K562 (cell line): ENCODE measurements at regions of chr4 and their contacts with region 1.

Region 1: DNA sequence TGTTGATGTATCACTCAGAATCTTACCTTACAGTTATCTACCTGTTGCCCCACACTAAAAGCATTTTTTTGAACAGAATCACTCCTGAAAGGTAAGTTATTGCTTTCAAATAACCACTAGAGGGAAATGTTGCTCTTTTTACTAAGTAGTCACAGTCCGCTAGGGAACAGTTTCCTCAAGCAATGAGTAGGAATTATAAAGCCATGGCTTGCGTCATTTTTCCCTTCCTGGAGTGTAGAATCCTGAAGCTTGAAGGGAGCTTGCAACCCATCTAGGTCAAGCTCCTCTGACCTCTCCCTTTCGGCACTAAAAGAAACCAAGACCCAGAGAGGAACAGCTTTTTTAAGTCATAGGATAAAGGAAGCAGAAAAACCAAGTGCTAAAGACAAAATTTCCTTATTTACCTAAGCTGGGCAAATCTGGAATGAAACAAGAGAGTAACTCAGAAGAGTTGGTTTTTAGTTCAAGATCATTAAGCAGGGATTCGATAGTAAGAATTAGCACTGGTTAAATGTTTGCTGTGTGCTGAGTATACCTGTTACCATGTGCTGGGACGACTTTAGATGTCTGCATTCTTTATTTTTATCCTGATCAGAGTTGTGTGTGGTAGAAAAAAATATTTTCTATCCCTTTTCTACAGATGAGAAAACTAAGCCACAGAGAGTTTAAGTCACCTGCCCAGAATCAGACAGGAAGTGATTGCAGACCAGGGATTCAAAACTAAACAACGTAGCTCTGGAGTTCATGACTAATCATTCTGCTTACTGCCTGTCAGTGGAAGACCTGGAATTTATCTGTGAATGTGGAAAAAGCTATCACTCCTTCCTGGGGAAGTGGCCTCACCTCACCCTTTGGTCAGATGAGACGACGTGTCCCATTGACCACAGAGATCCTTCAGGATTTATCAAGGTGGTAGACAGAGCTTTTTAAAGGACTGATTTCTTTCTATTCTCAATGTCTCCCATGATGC is 631.5 kb downstream of the RAB28 start:
- DNase-seq: peak in 2 of 4 experiments; percentile 18 to 37
- ATAC-seq: peak; percentile 88
- H3K4me3 ChIP-seq: no peak overlapping the region
- H3K27ac ChIP-seq: no peak overlapping the region
- H3K4me1 ChIP-seq: no peaks in the 10 kb centered on the region
- H3K27me3 ChIP-seq: no peaks in the 10 kb centered on the region
- CTCF ChIP-seq: peak; percentile 33 to 63 (median 40); a peak in 4 of 6 replicates
- EP300 ChIP-seq: no peak
- POLR2A ChIP-seq: no peak
- RAD21 ChIP-seq: peak; percentile 84

Region 2: GRCh38 chr4:12452291-12452690 is 400.3 kb before region 1 on chr4:
- CTCF ChIA-PET with region 1: no interaction called
- POLR2A ChIA-PET with region 1: no interaction called
- in situ Hi-C with region 1: no loop called
- intact Hi-C with region 1: no loop called
- DNase-seq: no peak
- ATAC-seq: no peak
- H3K4me3 ChIP-seq: no peak overlapping the region
- H3K27ac ChIP-seq: no peak overlapping the region
- H3K4me1 ChIP-seq: no peaks in the 10 kb centered on the region
- H3K27me3 ChIP-seq: no peaks in the 10 kb centered on the region
- CTCF ChIP-seq: no peak
- EP300 ChIP-seq: no peak
- POLR2A ChIP-seq: no peak
- RAD21 ChIP-seq: no peak

Region 3: GRCh38 chr4:12562021-12562420 is 290.6 kb before region 1 on chr4:
- CTCF ChIA-PET with region 1: no interaction called
- POLR2A ChIA-PET with region 1: no interaction called
- in situ Hi-C with region 1: no loop called
- intact Hi-C with region 1: no loop called
- DNase-seq: no peak
- ATAC-seq: no peak
- H3K4me3 ChIP-seq: no peak overlapping the region
- H3K27ac ChIP-seq: no peak overlapping the region
- H3K4me1 ChIP-seq: no peaks in the 10 kb centered on the region
- H3K27me3 ChIP-seq: no peaks in the 10 kb centered on the region
- CTCF ChIP-seq: no peak
- EP300 ChIP-seq: no peak
- POLR2A ChIP-seq: no peak
- RAD21 ChIP-seq: no peak

Region 4: GRCh38 chr4:12729384-12729783 is 123.2 kb before region 1 on chr4:
- CTCF ChIA-PET with region 1: no interaction called
- POLR2A ChIA-PET with region 1: no interaction called
- in situ Hi-C with region 1: no loop called
- intact Hi-C with region 1: loop called (anchors 5 kb)
- DNase-seq: peak; percentile 6 to 47 (median 31)
- ATAC-seq: 0 out of 3 replicates have a peak, but pooled peaks have one; percentile 42
- H3K4me3 ChIP-seq: no peak overlapping the region
- H3K27ac ChIP-seq: no peak overlapping the region
- H3K4me1 ChIP-seq: no peaks in the 10 kb centered on the region
- H3K27me3 ChIP-seq: no peaks in the 10 kb centered on the region
- CTCF ChIP-seq: peak in 2 of 3 experiments; percentile 38 to 52; a peak in 4 of 6 replicates
- EP300 ChIP-seq: no peak
- POLR2A ChIP-seq: no peak
- RAD21 ChIP-seq: peak; percentile 38 to 47

Region 5: DNA sequence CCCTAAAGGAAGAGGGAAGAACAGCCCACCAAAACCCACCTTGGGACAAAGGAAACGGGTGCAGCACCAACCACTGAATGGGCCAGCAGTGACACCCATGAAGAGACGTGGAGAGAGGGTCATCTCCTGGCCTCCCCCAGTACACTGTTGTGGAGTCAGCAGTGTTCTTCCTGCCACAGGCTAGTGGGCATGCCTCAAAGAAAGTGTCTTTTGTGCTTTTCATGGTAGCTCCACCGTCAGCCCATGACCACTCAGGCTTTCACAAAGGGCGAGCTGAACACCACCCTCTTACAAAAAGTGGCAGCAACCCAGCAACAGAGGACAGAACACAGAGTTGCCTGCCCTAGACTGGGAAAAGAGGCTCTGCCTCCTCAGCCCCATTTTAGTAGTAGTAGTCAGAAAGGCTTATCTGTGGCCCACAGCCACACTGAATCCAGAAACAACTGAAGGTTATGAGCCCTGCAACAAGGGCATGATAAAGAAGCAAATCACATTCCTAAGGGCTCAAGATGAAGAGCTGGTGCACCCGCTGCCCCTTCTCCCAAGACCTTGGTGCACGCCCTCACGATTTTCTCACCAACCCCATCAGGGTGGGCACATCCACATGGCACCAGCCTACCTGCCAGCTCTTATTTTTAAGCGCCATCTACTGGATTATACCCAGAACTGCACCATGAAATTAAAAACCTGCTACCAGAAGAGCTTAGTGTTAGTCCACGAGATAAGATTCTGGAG is 578.4 kb after region 1 on chr4:
- CTCF ChIA-PET with region 1: no interaction called
- POLR2A ChIA-PET with region 1: no interaction called
- in situ Hi-C with region 1: no loop called
- intact Hi-C with region 1: loop called (anchors 2 kb)
- DNase-seq: peak in 2 of 4 experiments; percentile 37 to 55
- ATAC-seq: peak; percentile 88
- H3K4me3 ChIP-seq: no peak overlapping the region
- H3K27ac ChIP-seq: peak overlapping the region; percentile 37; the same call in 2 of the 3 replicates
- H3K4me1 ChIP-seq: peaks cover 8 to 15% of the 10 kb centered on the region in 2 experiments; a peak in 3 of 5 replicates
- H3K27me3 ChIP-seq: no peaks in the 10 kb centered on the region
- CTCF ChIP-seq: peak; percentile 47 to 80 (median 57)
- EP300 ChIP-seq: no peak
- POLR2A ChIP-seq: no peak
- RAD21 ChIP-seq: peak in 1 of 2 experiments; percentile 73; a peak in 3 of 4 replicates